ENCODE measurements at regions of chr3 and their contacts with region 1.

Region 1: GRCh38 chr3:14651440-14652251 is at the start of gene CCDC174:
- DNase-seq: peak; percentile 97
- ATAC-seq: peak; percentile 99
- H3K4me3 Mint-ChIP-seq: peak within 1 kb of the TSS; percentile 97
- H3K27ac Mint-ChIP-seq: peak within 1 kb of the TSS; percentile 98
- H3K4me1 Mint-ChIP-seq: peaks cover 35% of the 10 kb centered on the region
- H3K27me3 Mint-ChIP-seq: no peaks in the 10 kb centered on the region
- CTCF ChIP-seq: no peak
- total RNA-seq, gene CCDC174: 14.2 to 16.2 TPM

Region 2: GRCh38 chr3:14431892-14432834 is 219.5 kb before region 1 on chr3:
- CTCF ChIA-PET with region 1: no interaction called
- POLR2A ChIA-PET with region 1: interaction called, 13 read pairs
- intact Hi-C with region 1: no loop called
- DNase-seq: peak; percentile 98
- ATAC-seq: peak; percentile 87
- H3K4me3 Mint-ChIP-seq: peak overlapping the region; percentile 65
- H3K27ac Mint-ChIP-seq: peak overlapping the region; percentile 94
- H3K4me1 Mint-ChIP-seq: peaks cover 84% of the 10 kb centered on the region
- H3K27me3 Mint-ChIP-seq: no peaks in the 10 kb centered on the region
- CTCF ChIP-seq: no peak

Region 3: GRCh38 chr3:14730703-14731382 is 79.2 kb after region 1 on chr3:
- CTCF ChIA-PET with region 1: no interaction called
- POLR2A ChIA-PET with region 1: no interaction called
- intact Hi-C with region 1: no loop called
- DNase-seq: no peak
- ATAC-seq: no peak
- H3K4me3 Mint-ChIP-seq: no peak overlapping the region
- H3K27ac Mint-ChIP-seq: no peak overlapping the region
- H3K4me1 Mint-ChIP-seq: no peaks in the 10 kb centered on the region
- H3K27me3 Mint-ChIP-seq: peaks cover 1% of the 10 kb centered on the region
- CTCF ChIP-seq: no peak

Region 4: DNA sequence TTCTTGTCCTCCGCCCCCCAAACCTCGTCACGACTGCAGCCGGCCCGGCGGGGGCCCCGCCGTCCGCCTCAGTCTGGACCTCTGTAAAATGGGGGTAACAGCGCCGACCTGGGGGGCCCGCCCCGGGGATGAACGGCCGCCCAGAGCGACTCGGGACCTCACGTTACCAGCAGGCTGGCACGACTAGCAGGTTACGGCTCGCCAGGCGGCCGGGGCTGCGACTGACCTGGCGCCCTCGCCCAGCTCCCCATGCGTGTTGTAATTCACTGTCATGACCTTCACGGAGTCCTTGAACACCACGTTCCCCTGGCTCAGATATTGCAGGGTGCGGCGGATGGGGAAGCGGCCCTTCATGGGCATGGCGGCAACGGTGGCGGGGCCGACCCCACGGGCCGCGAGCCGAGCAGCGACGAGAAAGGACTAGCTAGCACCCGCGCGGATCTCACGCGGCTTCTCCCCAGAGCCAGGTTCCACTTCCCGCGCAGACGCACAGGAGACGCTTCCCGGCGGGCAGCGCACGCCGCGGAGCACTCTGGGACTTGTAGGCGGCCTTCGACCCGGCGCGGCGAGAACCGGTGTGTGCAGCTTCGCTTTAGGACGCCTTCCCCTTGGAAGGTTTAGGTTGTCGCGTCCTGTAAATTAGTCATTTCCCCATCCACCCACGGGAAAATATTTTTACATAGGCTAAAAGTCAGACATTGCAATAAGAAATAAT is 413.3 kb after region 1 on chr3 and contains the start of gene MRPS25:
- CTCF ChIA-PET with region 1: no interaction called
- POLR2A ChIA-PET with region 1: no interaction called
- intact Hi-C with region 1: no loop called
- DNase-seq: peak; percentile 94
- ATAC-seq: peak; percentile 99
- H3K4me3 Mint-ChIP-seq: peak within 1 kb of the TSS; percentile 96
- H3K27ac Mint-ChIP-seq: peak within 1 kb of the TSS; percentile 97
- H3K4me1 Mint-ChIP-seq: peaks cover 16% of the 10 kb centered on the region
- H3K27me3 Mint-ChIP-seq: no peaks in the 10 kb centered on the region
- CTCF ChIP-seq: no peak
- total RNA-seq, gene MRPS25: 73.9 to 78.2 TPM

Measured in activated CD8-positive, alpha-beta T cell treated with anti-CD3 and anti-CD28 coated beads for 36 hours (primary cell).